Endothelial cell of umbilical vein (primary cell): ENCODE measurements at regions of chr6 and their contacts with region 1.

Region 1: GRCh38 chr6:107957909-107958688 is at the start of gene SEC63:
- DNase-seq: peak; percentile 97
- H3K4me3 ChIP-seq: peak within 1 kb of the TSS; percentile 79 to 94 (median 93)
- H3K27ac ChIP-seq: peak within 1 kb of the TSS; percentile 91
- H3K4me1 ChIP-seq: peaks cover 10% of the 10 kb centered on the region
- H3K27me3 ChIP-seq: no peaks in the 10 kb centered on the region
- CTCF ChIP-seq: no peak
- POLR2A ChIP-seq: peak; percentile 82
- total RNA-seq, gene SEC63: 111 and 132 TPM in 2 replicates

Region 2: GRCh38 chr6:107033126-107033525 is 925.0 kb before region 1 on chr6:
- CTCF ChIA-PET with region 1: no interaction called
- POLR2A ChIA-PET with region 1: no interaction called
- dilution Hi-C with region 1: no loop called
- intact Hi-C with region 1: loop called (anchors 1 kb)
- DNase-seq: no peak
- H3K4me3 ChIP-seq: no peak overlapping the region
- H3K27ac ChIP-seq: no peak overlapping the region
- H3K4me1 ChIP-seq: no peaks in the 10 kb centered on the region
- H3K27me3 ChIP-seq: no peaks in the 10 kb centered on the region
- CTCF ChIP-seq: no peak
- POLR2A ChIP-seq: no peak

Region 3: DNA sequence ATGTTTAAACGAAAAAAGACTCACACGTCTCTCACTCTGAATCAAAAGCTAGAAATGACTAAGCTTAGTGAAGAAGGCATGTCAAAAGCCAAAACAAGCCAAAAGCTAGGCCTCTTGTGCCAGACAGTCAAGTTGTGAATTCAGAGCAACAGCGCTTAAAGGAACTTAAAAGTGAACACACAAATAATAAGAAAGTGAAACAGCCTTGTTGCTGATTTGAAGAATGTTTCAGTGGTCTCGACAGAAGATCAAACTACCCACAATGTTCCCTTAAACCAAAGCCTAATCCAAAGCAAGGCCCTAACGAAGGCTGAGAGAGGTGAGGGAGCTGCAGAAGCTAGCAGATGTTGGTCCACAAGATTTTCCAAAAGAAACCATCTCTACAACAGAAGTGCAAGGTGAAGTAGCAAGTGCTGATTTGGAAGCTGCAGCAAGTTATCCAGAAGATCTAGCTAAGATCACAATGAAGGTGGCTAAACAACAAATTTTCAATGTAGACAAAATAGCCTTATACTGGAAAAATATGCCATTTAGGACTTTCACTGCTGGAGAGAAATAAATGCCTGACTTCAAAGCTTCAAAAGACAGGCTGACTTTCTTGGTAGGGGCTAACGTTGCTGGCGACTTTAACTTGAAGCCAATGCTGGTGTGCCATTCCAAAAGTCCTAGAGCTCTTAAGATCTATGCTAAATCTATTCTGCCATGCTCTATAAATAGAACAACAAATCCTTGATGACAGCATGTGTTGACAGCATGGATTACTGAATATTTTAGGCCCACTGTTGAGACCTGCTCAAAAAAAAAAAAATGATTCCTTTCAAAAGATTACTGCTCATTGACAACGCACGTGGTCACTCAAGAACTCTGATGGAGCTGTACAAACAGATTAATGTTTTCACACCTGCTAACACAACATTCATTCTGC is 40.4 kb before region 1 on chr6:
- CTCF ChIA-PET with region 1: no interaction called
- POLR2A ChIA-PET with region 1: no interaction called
- dilution Hi-C with region 1: no loop called
- intact Hi-C with region 1: no loop called
- DNase-seq: no peak
- H3K4me3 ChIP-seq: no peak overlapping the region
- H3K27ac ChIP-seq: no peak overlapping the region
- H3K4me1 ChIP-seq: no peaks in the 10 kb centered on the region
- H3K27me3 ChIP-seq: no peaks in the 10 kb centered on the region
- CTCF ChIP-seq: no peak
- POLR2A ChIP-seq: no peak

Region 4: DNA sequence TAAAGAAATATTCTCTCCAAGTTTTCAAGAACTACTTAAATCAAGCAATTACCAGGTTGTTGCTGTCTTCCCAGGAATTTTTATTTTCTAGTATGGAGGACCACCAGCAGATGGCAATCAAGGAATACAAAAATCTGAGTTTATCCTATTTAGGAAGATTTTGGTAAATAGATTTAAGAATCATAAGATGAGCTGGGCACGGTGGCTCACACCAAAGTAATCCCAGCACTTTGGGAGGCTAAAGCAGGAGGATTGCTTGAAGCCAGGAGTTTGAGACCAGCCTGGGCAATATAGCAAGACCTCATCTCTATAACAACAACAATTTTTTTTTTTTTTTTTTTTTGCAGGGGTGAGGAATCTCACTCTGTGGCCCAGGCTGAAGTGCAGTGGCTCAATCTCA is 19.2 kb after region 1 on chr6:
- CTCF ChIA-PET with region 1: no interaction called
- POLR2A ChIA-PET with region 1: no interaction called
- dilution Hi-C with region 1: no loop called
- intact Hi-C with region 1: no loop called
- DNase-seq: peak; percentile 61
- H3K4me3 ChIP-seq: no peak overlapping the region
- H3K27ac ChIP-seq: no peak overlapping the region
- H3K4me1 ChIP-seq: no peaks in the 10 kb centered on the region
- H3K27me3 ChIP-seq: peaks cover 8 to 12% of the 10 kb centered on the region in 2 experiments
- CTCF ChIP-seq: peak; percentile 5 to 8
- POLR2A ChIP-seq: no peak

Region 5: GRCh38 chr6:108074359-108075144 is 116.5 kb after region 1 on chr6 and contains the start of gene OSTM1:
- CTCF ChIA-PET with region 1: no interaction called
- POLR2A ChIA-PET with region 1: no interaction called
- dilution Hi-C with region 1: no loop called
- intact Hi-C with region 1: loop called (anchors 1 kb)
- DNase-seq: peak; percentile 91
- H3K4me3 ChIP-seq: peak within 1 kb of the TSS; percentile 62 to 71 (median 70)
- H3K27ac ChIP-seq: peak within 1 kb of the TSS; percentile 33
- H3K4me1 ChIP-seq: peaks cover 5% of the 10 kb centered on the region
- H3K27me3 ChIP-seq: peaks cover 2 to 5% of the 10 kb centered on the region in 2 experiments
- CTCF ChIP-seq: no peak
- POLR2A ChIP-seq: peak; percentile 71
- total RNA-seq, gene OSTM1: 26.4 and 27.8 TPM in 2 replicates